Heart right ventricle (tissue), 16 donors: ENCODE measurements at regions of chr9 and their contacts with region 1.

Region 1: GRCh38 chr9:70352802-70353201 is 61.7 kb downstream of the KLF9 start:
- DNase-seq: no peak
- ATAC-seq: peak in 2 of 8 donors; percentile 36 to 57
- H3K4me3 ChIP-seq: no peak overlapping the region
- H3K27ac ChIP-seq: peak overlapping the region in 2 of 10 donors; percentile 3 to 16
- H3K4me1 ChIP-seq: peaks cover 0 to 33% (median 10%) of the 10 kb centered on the region in 9 donors
- H3K27me3 ChIP-seq: no peaks in the 10 kb centered on the region
- CTCF ChIP-seq: peak; percentile 48 to 89 (median 73)

Region 2: GRCh38 chr9:70392189-70392588 is 39.4 kb after region 1 on chr9:
- intact Hi-C with region 1: loop called in 5 of 10 experiments (anchors 5 to 10 kb)
- DNase-seq: no peak
- ATAC-seq: peak in 6 of 8 donors; percentile 28 to 53 (median 40)
- H3K4me3 ChIP-seq: no peak overlapping the region
- H3K27ac ChIP-seq: peak overlapping the region in 8 of 10 donors; percentile 7 to 66 (median 36)
- H3K4me1 ChIP-seq: peaks cover 36 to 100% (median 80%) of the 10 kb centered on the region in 9 donors
- H3K27me3 ChIP-seq: no peaks in the 10 kb centered on the region
- CTCF ChIP-seq: peak in 6 of 9 donors; percentile 19 to 55 (median 42)

Region 3: GRCh38 chr9:70413798-70414775 is 61.3 kb after region 1 on chr9 and contains the start of gene KLF9:
- intact Hi-C with region 1: loop called in 3 of 10 experiments (anchors 5 kb)
- DNase-seq: peak; percentile 87 to 96
- ATAC-seq: peak; percentile 74 to 85 (median 81)
- H3K4me3 ChIP-seq: peak within 1 kb of the TSS; percentile 69 to 99 (median 78)
- H3K27ac ChIP-seq: peak within 1 kb of the TSS; percentile 99 to 100 (median 100)
- H3K4me1 ChIP-seq: peaks cover 12 to 67% (median 60%) of the 10 kb centered on the region in 9 donors
- H3K27me3 ChIP-seq: no peaks in the 10 kb centered on the region
- CTCF ChIP-seq: peak in 1 of 9 donors; percentile 10
- total RNA-seq, gene KLF9: 27.3 to 67.4 (median 41.1) TPM

Region 4: GRCh38 chr9:70510157-70510770 is 157.5 kb after region 1 on chr9:
- intact Hi-C with region 1: loop called in 1 of 10 experiments (anchors 2 kb)
- DNase-seq: peak; percentile 47 to 51
- ATAC-seq: peak in 2 of 8 donors; percentile 61 to 71
- H3K4me3 ChIP-seq: no peak overlapping the region
- H3K27ac ChIP-seq: no peak overlapping the region
- H3K4me1 ChIP-seq: peaks cover 0 to 6% (median 0%) of the 10 kb centered on the region in 9 donors
- H3K27me3 ChIP-seq: no peaks in the 10 kb centered on the region
- CTCF ChIP-seq: peak in 8 of 9 donors; percentile 50 to 77 (median 56)

Region 5: GRCh38 chr9:70701163-70701562 is 348.4 kb after region 1 on chr9:
- intact Hi-C with region 1: no loop called
- DNase-seq: no peak
- ATAC-seq: peak in 6 of 8 donors; percentile 56 to 85 (median 76)
- H3K4me3 ChIP-seq: no peak overlapping the region
- H3K27ac ChIP-seq: no peak overlapping the region
- H3K4me1 ChIP-seq: no peaks in the 10 kb centered on the region
- H3K27me3 ChIP-seq: no peaks in the 10 kb centered on the region
- CTCF ChIP-seq: no peak